ENCODE measurements at regions of chr20 and their contacts with region 1.

Region 1: GRCh38 chr20:44153636-44154043 is 33.3 kb downstream of the JPH2 start:
- DNase-seq: peak; percentile 33
- H3K4me3 ChIP-seq: no peak overlapping the region
- H3K27ac ChIP-seq: peak overlapping the region; percentile 70
- H3K4me1 ChIP-seq: peaks cover 43% of the 10 kb centered on the region
- H3K27me3 ChIP-seq: no peaks in the 10 kb centered on the region
- CTCF ChIP-seq: no peak

Region 2: GRCh38 chr20:44115762-44116644 is 37.6 kb before region 1 on chr20:
- CTCF ChIA-PET with region 1: no interaction called
- dilution Hi-C with region 1: no loop called
- in situ Hi-C with region 1: no loop called
- intact Hi-C with region 1: loop called (anchors 5 kb)
- DNase-seq: no peak
- H3K4me3 ChIP-seq: no peak overlapping the region
- H3K27ac ChIP-seq: no peak overlapping the region
- H3K4me1 ChIP-seq: peaks cover 11% of the 10 kb centered on the region
- H3K27me3 ChIP-seq: no peaks in the 10 kb centered on the region
- CTCF ChIP-seq: no peak

Measured in mammary epithelial cell (primary cell).